Left cardiac atrium (tissue), 4 donors: ENCODE measurements at regions of chr1 and their contacts with region 1.

Region 1: GRCh38 chr1:45359882-45360513 is 19.8 kb upstream of the MUTYH start:
- DNase-seq: peak; percentile 75
- ATAC-seq: peak; percentile 82 to 88

Region 2: GRCh38 chr1:45084562-45084961 is 275.4 kb before region 1 on chr1:
- intact Hi-C with region 1: no loop called
- DNase-seq: no peak
- ATAC-seq: no peak

Region 3: DNA sequence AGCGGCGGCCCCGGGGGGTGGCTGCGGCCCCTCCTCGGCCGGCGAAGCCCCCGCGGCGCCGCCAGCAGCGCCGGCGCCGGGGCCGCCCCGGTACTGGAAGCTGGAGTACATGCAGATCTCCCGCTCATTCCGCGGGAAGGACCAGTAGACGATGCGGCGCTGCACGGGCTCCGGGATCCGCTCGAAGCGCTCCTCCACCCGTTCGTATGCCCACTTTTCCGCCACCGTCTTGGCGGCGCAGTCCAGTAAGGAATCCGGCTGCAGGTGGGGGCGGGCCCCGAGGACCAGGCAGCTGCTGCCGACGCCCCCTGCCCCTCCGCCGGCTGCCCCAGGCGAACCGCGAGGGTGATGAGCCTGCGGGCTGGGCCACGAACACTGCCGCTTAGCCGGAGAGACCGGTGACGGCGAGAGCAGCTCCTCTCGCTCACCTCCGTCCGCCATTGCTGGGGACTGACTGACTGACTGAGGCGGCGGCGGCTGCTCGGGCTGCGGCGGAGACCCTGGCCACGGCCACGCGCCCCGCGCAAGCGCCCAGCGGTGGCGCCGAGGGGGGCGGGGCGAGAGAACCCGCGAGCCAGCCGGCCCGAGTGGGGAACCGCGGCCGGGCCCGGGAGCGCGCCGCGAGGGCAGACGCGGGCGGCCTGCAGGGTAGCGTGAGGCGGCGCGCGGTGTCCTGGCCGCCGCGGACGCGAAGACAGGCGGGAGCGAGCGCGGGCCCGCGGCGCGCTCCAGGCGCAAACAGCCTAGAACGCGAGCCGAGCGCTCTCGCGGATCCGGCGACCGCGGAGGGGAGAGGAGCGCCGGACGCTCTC is 153.9 kb before region 1 on chr1 and contains the start of gene ZSWIM5:
- intact Hi-C with region 1: no loop called
- DNase-seq: peak; percentile 77
- ATAC-seq: peak; percentile 97 to 98
- total RNA-seq, gene ZSWIM5: 1.3 to 1.5 TPM

Region 4: GRCh38 chr1:45385302-45385701 is 25.3 kb after region 1 on chr1:
- intact Hi-C with region 1: no loop called
- DNase-seq: no peak
- ATAC-seq: no peak

Region 5: GRCh38 chr1:45490626-45491486 is 130.9 kb after region 1 on chr1 and contains the start of gene TESK2:
- intact Hi-C with region 1: loop called (anchors 2 to 5 kb)
- DNase-seq: peak; percentile 95
- ATAC-seq: peak; percentile 98
- total RNA-seq, gene TESK2: 1.4 to 2.8 TPM

Region 6: DNA sequence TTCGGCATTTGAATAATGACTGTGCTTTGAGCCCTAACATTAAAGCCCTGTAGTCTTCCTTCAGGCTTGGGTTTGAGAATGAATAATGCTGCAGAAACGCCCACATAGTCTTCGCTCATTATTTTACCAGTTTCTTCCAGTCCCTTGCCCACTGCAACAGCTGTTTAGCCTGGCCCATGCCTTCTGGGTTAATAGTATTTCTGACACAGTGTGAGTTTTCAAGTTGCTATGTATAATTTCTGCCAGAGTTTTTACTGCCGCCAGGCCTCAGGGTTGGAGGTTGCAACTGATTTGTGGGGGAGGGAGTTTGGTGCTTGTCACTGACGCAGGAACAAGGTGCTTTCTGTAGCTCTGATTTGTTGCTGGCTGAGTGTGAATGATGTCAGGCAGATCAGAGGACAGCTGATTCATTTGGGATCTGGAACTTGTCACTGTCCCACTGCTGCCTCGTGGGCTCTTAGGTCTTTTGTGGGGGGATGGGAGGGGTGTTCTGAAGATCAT is 553.2 kb after region 1 on chr1:
- intact Hi-C with region 1: no loop called
- DNase-seq: peak; percentile 71
- ATAC-seq: peak; percentile 95 to 96